Activated CD4-positive, alpha-beta T cell treated with anti-CD3 and anti-CD28 coated beads for 36 hours (primary cell): ENCODE measurements at regions of chr14 and their contacts with region 1.

Region 1: GRCh38 chr14:21455911-21456667 is at the start of gene CHD8:
- DNase-seq: peak; percentile 100
- ATAC-seq: peak; percentile 99
- H3K4me3 Mint-ChIP-seq: peak within 1 kb of the TSS; percentile 97
- H3K27ac Mint-ChIP-seq: peak within 1 kb of the TSS; percentile 99
- H3K4me1 Mint-ChIP-seq: peaks cover 30% of the 10 kb centered on the region
- H3K27me3 Mint-ChIP-seq: no peaks in the 10 kb centered on the region
- total RNA-seq, gene CHD8: 84.3 to 104 TPM

Region 2: GRCh38 chr14:21269252-21270046 is 186.6 kb before region 1 on chr14 and contains the start of gene HNRNPC:
- CTCF ChIA-PET with region 1: no interaction called
- POLR2A ChIA-PET with region 1: interaction called, 3 read pairs
- intact Hi-C with region 1: loop called (anchors 1 kb)
- DNase-seq: peak; percentile 100
- ATAC-seq: peak; percentile 89
- H3K4me3 Mint-ChIP-seq: peak within 1 kb of the TSS; percentile 93
- H3K27ac Mint-ChIP-seq: peak within 1 kb of the TSS; percentile 100
- H3K4me1 Mint-ChIP-seq: peaks cover 25% of the 10 kb centered on the region
- H3K27me3 Mint-ChIP-seq: no peaks in the 10 kb centered on the region
- total RNA-seq, gene HNRNPC: 1,155 to 1,665 TPM

Region 3: GRCh38 chr14:21414137-21414631 is 41.9 kb before region 1 on chr14:
- CTCF ChIA-PET with region 1: interaction called, 3 read pairs
- POLR2A ChIA-PET with region 1: no interaction called
- intact Hi-C with region 1: loop called in 1 of 2 experiments (anchors 1 kb)
- DNase-seq: no peak
- ATAC-seq: peak; percentile 91
- H3K4me3 Mint-ChIP-seq: no peak overlapping the region
- H3K27ac Mint-ChIP-seq: peak overlapping the region; percentile 88
- H3K4me1 Mint-ChIP-seq: peaks cover 26% of the 10 kb centered on the region
- H3K27me3 Mint-ChIP-seq: no peaks in the 10 kb centered on the region

Region 4: GRCh38 chr14:21467616-21468015 is 11.5 kb after region 1 on chr14:
- CTCF ChIA-PET with region 1: interaction called, 12 read pairs
- POLR2A ChIA-PET with region 1: no interaction called
- intact Hi-C with region 1: no loop called
- DNase-seq: no peak
- ATAC-seq: peak; percentile 36
- H3K4me3 Mint-ChIP-seq: no peak overlapping the region
- H3K27ac Mint-ChIP-seq: no peak overlapping the region
- H3K4me1 Mint-ChIP-seq: no peaks in the 10 kb centered on the region
- H3K27me3 Mint-ChIP-seq: no peaks in the 10 kb centered on the region

Region 5: GRCh38 chr14:21498553-21499526 is 42.8 kb after region 1 on chr14:
- CTCF ChIA-PET with region 1: interaction called, 10 read pairs
- POLR2A ChIA-PET with region 1: no interaction called
- intact Hi-C with region 1: no loop called
- DNase-seq: peak; percentile 22
- ATAC-seq: peak; percentile 78
- H3K4me3 Mint-ChIP-seq: no peak overlapping the region
- H3K27ac Mint-ChIP-seq: peak overlapping the region; percentile 64
- H3K4me1 Mint-ChIP-seq: peaks cover 23% of the 10 kb centered on the region
- H3K27me3 Mint-ChIP-seq: no peaks in the 10 kb centered on the region

Region 6: GRCh38 chr14:21525962-21526671 is 70.0 kb after region 1 on chr14 and contains the start of gene SALL2:
- CTCF ChIA-PET with region 1: no interaction called
- POLR2A ChIA-PET with region 1: no interaction called
- intact Hi-C with region 1: loop called in 1 of 2 experiments (anchors 1 kb)
- DNase-seq: peak; percentile 87
- ATAC-seq: peak; percentile 87
- H3K4me3 Mint-ChIP-seq: peak within 1 kb of the TSS; percentile 71
- H3K27ac Mint-ChIP-seq: peak within 1 kb of the TSS; percentile 72
- H3K4me1 Mint-ChIP-seq: peaks cover 16% of the 10 kb centered on the region
- H3K27me3 Mint-ChIP-seq: no peaks in the 10 kb centered on the region
- total RNA-seq, gene SALL2: 5.5 to 6.3 TPM

Region 7: GRCh38 chr14:22589096-22589839 is 1133.2 kb after region 1 on chr14 and contains the start of gene DAD1:
- CTCF ChIA-PET with region 1: no interaction called
- POLR2A ChIA-PET with region 1: no interaction called
- intact Hi-C with region 1: loop called in 1 of 2 experiments (anchors 10 kb)
- DNase-seq: peak; percentile 100
- ATAC-seq: peak; percentile 84
- H3K4me3 Mint-ChIP-seq: peak within 1 kb of the TSS; percentile 93
- H3K27ac Mint-ChIP-seq: peak within 1 kb of the TSS; percentile 97
- H3K4me1 Mint-ChIP-seq: peaks cover 72% of the 10 kb centered on the region
- H3K27me3 Mint-ChIP-seq: peaks cover 1% of the 10 kb centered on the region
- total RNA-seq, gene DAD1: 265 to 302 TPM